ENCODE measurements at regions of chr9 and their contacts with region 1.

Region 1: GRCh38 chr9:2158111-2158610 is 143.0 kb downstream of the SMARCA2 start:
- DNase-seq: peak; percentile 50
- H3K4me3 Mint-ChIP-seq: peak overlapping the region; percentile 77
- H3K27ac Mint-ChIP-seq: peak overlapping the region; percentile 85
- H3K4me1 Mint-ChIP-seq: peaks cover 57% of the 10 kb centered on the region
- H3K27me3 Mint-ChIP-seq: no peaks in the 10 kb centered on the region

Region 2: DNA sequence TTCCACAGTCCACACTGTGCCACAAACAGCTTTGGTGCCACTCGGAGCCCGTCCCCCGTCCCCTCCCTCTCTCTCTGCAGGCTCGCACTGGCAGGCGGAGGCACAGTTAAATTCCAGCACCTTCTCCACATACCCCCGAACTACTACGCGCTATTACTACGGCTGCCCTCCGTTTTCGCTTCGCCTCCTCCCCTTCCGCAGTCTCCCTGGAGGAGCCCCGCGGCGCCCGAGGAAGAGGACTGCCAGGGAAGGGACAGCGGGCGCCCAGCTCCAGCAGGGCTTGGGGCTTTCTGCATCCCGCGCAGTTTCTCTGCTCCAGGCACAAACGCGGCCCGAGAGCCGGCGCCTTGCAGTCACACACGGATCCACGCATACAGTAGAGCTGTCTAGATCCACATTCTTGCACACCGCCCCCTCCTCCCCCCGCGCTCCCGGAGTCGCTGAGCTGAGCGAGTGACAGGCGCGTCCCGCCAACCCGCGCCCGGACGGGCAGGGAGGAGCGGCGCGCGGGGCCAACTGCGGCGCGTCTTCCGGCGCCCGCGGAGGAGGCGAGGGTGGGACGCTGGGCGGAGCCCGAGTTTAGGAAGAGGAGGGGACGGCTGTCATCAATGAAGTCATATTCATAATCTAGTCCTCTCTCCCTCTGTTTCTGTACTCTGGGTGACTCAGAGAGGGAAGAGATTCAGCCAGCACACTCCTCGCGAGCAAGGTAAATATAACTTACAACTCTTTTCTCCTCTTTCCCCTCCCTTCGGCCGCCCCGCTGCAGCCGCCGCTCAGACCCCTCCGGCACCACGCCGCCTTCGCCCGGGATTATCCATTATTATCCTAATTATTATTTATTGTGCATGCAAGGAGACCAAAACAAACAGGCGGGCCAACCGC is 143.2 kb before region 1 on chr9 and contains the start of gene SMARCA2:
- CTCF ChIA-PET with region 1: no interaction called
- POLR2A ChIA-PET with region 1: interaction called, 3 read pairs
- intact Hi-C with region 1: loop called (anchors 2 kb)
- DNase-seq: peak; percentile 98
- H3K4me3 Mint-ChIP-seq: peak within 1 kb of the TSS; percentile 99
- H3K27ac Mint-ChIP-seq: peak within 1 kb of the TSS; percentile 100
- H3K4me1 Mint-ChIP-seq: peaks cover 47% of the 10 kb centered on the region
- H3K27me3 Mint-ChIP-seq: peaks cover 4% of the 10 kb centered on the region
- total RNA-seq, gene SMARCA2: 95.1 to 100 TPM

Region 3: GRCh38 chr9:2125906-2126305 is 32.3 kb before region 1 on chr9:
- CTCF ChIA-PET with region 1: interaction called, 3 read pairs
- POLR2A ChIA-PET with region 1: no interaction called
- intact Hi-C with region 1: loop called (anchors 1 kb)
- DNase-seq: no peak
- H3K4me3 Mint-ChIP-seq: peak overlapping the region; percentile 49
- H3K27ac Mint-ChIP-seq: peak overlapping the region; percentile 71
- H3K4me1 Mint-ChIP-seq: peaks cover 39% of the 10 kb centered on the region
- H3K27me3 Mint-ChIP-seq: no peaks in the 10 kb centered on the region

Region 4: DNA sequence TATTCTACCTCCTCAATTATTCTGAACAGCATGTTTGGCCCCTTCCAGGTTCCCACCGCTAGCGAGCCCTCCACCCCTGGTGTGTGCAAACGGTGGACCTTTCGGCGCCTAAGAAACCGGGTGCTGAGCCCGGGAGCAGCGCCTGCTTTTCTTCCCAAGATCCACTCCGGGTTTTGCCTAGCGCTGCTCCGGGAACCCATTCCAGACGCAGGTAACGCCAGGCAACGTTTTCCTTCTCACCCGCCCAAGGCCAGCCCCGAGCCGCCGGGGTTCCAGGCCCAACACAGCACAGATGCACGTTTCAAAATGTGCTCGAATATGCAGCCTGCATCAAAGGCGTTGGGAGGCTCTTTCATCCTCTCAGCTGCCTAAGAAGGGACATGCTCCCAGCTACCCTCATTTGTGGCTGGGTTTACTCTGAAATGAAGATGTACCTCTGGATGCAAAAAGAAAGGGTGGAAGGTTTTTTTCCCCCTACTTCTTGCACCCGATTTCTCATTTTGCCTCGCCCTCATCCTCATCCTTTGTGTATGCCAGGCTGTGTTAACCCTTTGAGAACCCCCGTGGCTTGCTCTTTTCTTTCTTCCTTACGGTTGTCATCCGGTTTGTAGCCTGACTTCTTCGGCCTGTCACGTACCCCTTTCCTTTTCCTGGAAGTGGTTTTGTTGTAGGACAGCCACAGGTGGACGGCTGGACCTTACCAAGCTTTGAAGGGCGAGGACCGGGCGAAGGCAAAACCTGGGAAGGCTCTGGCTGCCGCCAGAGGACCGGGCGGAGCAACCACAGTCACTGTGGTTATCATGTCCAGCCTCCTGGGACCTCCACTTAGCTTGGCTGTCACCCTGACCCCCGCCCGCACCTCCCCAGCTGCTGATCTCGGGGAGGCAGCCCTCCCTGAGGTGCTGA is 83.9 kb after region 1 on chr9:
- CTCF ChIA-PET with region 1: no interaction called
- POLR2A ChIA-PET with region 1: no interaction called
- intact Hi-C with region 1: loop called (anchors 5 kb)
- DNase-seq: peak; percentile 77
- H3K4me3 Mint-ChIP-seq: peak overlapping the region; percentile 72
- H3K27ac Mint-ChIP-seq: no peak overlapping the region
- H3K4me1 Mint-ChIP-seq: peaks cover 14% of the 10 kb centered on the region
- H3K27me3 Mint-ChIP-seq: peaks cover 9% of the 10 kb centered on the region

Region 5: DNA sequence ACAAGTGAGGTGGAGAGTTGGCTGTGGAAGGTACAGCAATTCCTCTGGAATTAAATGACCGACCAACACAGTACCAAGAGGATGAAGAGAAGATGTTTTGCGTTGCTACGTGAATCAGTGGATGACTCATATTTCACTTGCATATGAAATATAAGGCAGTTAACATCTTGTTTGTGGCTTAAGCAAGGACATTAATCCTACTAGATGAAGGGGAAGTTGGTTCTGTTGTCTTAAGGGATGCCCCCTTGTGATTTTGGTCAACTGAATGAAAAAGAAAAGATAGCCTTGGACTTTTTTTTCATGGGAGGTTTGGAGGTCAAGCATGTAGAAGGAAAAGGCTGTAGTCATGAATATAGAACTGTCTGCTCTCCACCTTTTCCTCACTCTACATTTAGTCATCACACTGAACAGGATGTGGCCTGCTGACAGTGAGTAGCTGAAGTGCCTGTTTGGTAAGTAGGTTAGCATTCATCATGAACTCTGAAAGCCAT is 497.3 kb after region 1 on chr9:
- CTCF ChIA-PET with region 1: no interaction called
- POLR2A ChIA-PET with region 1: no interaction called
- intact Hi-C with region 1: loop called (anchors 1 kb)
- DNase-seq: peak; percentile 56
- H3K4me3 Mint-ChIP-seq: no peak overlapping the region
- H3K27ac Mint-ChIP-seq: peak overlapping the region; percentile 80
- H3K4me1 Mint-ChIP-seq: peaks cover 23% of the 10 kb centered on the region
- H3K27me3 Mint-ChIP-seq: no peaks in the 10 kb centered on the region